ENCODE measurements at regions of chr20 and their contacts with region 1.

Region 1: GRCh38 chr20:19784511-19785172 is 26.6 kb downstream of the RIN2 start:
- DNase-seq: peak; percentile 82
- H3K4me3 ChIP-seq: no peak overlapping the region
- H3K27ac ChIP-seq: peak overlapping the region; percentile 93
- H3K4me1 ChIP-seq: peaks cover 44% of the 10 kb centered on the region
- H3K27me3 ChIP-seq: no peaks in the 10 kb centered on the region
- CTCF ChIP-seq: peak; percentile 74 to 78

Region 2: GRCh38 chr20:19725814-19726525 is 58.7 kb before region 1 on chr20:
- CTCF ChIA-PET with region 1: no interaction called
- dilution Hi-C with region 1: no loop called
- in situ Hi-C with region 1: no loop called
- intact Hi-C with region 1: no loop called
- DNase-seq: peak; percentile 35
- H3K4me3 ChIP-seq: no peak overlapping the region
- H3K27ac ChIP-seq: no peak overlapping the region
- H3K4me1 ChIP-seq: peaks cover 4% of the 10 kb centered on the region
- H3K27me3 ChIP-seq: no peaks in the 10 kb centered on the region
- CTCF ChIP-seq: no peak

Region 3: DNA sequence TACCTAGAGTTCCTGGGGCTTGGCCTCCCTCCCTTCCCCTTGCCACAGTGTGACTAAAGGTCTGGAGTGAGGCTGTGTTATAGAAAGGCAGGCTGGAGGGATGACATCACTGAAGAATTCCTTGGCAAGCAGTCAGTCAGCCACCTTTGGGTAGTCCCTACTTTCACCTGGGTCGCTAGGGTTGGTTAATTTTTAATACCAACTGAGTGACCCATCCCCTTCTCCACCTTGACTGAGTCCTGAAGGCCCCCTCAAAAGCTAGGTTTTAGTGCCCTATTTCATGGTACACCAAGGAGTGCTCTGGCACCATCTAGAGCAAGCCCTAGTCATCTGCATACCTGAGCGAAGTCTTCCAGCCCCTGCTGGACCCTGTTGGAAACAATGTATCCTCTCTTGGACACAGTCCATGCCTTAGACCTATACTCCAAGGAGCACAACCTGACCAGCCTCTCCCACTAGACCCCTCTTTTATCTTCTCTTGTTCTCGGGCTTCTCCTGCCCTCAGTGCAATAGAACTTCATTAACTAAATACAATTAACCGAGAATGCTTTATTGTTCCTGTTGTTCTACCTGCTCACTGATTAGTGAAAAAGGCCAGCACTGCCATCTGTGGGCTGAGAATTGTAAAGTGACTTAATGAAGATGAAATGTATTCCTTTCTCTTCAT is 18.0 kb after region 1 on chr20:
- CTCF ChIA-PET with region 1: no interaction called
- dilution Hi-C with region 1: no loop called
- in situ Hi-C with region 1: no loop called
- intact Hi-C with region 1: loop called (anchors 1 kb)
- DNase-seq: peak; percentile 89
- H3K4me3 ChIP-seq: no peak overlapping the region
- H3K27ac ChIP-seq: peak overlapping the region; percentile 43
- H3K4me1 ChIP-seq: peaks cover 26% of the 10 kb centered on the region
- H3K27me3 ChIP-seq: no peaks in the 10 kb centered on the region
- CTCF ChIP-seq: peak; percentile 39 to 43

Region 4: DNA sequence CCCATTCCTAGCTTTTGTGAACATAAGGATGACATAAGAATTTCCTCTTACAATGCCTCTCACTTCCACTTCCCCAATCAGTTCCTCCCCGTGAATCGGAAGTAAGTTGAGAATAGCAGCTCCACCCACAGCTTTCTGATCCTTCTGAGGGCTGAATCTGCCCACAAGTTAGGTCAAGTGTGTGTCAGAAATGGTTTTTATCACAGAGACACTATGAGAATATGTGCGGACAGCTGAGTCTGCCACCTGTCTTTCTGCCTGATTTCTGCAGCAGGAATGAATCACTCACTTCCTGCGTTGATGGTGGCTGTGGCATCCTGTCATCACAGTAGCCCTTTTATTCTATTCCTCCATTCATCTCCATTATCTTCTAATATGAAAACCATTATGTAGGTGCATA is 43.6 kb after region 1 on chr20:
- CTCF ChIA-PET with region 1: no interaction called
- dilution Hi-C with region 1: no loop called
- in situ Hi-C with region 1: no loop called
- intact Hi-C with region 1: loop called (anchors 1 kb)
- DNase-seq: peak; percentile 78
- H3K4me3 ChIP-seq: no peak overlapping the region
- H3K27ac ChIP-seq: no peak overlapping the region
- H3K4me1 ChIP-seq: peaks cover 16% of the 10 kb centered on the region
- H3K27me3 ChIP-seq: no peaks in the 10 kb centered on the region
- CTCF ChIP-seq: peak; percentile 40 to 62

Region 5: DNA sequence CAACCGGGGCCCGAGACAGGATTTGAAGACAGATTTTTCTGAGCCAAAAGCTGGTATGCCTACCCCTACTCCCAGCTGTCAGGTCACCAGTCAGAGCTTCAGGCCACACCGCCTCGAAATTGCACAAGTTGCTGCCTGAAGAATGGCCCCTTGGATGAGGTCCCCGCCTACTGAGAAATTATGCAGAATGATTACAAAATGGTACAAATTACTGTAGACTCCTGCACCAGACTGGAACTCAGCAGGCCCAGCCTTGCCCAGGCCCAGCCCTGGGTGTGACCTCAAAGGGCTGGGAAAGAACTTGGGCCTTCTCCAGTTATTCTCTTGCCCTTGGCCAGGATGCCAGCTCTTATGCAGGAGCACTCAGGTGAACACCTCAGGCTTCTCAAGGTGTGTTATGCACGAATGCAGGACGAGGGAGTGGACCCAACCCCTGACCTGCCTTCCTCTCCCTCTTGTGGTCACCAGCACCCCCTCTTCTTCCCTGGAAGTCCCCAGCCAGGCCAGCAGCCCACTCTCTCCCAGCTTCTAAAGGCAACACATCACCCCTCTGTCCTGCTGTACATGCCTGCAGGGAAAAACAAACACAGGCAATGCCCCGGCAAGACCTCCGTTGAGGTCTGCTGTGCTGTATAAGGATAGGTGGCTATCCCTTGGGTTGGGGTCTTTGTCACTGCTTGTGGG is 143.8 kb after region 1 on chr20:
- CTCF ChIA-PET with region 1: no interaction called
- dilution Hi-C with region 1: no loop called
- in situ Hi-C with region 1: no loop called
- intact Hi-C with region 1: loop called (anchors 2 kb)
- DNase-seq: peak; percentile 97
- H3K4me3 ChIP-seq: no peak overlapping the region
- H3K27ac ChIP-seq: peak overlapping the region; percentile 80
- H3K4me1 ChIP-seq: peaks cover 26% of the 10 kb centered on the region
- H3K27me3 ChIP-seq: no peaks in the 10 kb centered on the region
- CTCF ChIP-seq: no peak

Region 6: DNA sequence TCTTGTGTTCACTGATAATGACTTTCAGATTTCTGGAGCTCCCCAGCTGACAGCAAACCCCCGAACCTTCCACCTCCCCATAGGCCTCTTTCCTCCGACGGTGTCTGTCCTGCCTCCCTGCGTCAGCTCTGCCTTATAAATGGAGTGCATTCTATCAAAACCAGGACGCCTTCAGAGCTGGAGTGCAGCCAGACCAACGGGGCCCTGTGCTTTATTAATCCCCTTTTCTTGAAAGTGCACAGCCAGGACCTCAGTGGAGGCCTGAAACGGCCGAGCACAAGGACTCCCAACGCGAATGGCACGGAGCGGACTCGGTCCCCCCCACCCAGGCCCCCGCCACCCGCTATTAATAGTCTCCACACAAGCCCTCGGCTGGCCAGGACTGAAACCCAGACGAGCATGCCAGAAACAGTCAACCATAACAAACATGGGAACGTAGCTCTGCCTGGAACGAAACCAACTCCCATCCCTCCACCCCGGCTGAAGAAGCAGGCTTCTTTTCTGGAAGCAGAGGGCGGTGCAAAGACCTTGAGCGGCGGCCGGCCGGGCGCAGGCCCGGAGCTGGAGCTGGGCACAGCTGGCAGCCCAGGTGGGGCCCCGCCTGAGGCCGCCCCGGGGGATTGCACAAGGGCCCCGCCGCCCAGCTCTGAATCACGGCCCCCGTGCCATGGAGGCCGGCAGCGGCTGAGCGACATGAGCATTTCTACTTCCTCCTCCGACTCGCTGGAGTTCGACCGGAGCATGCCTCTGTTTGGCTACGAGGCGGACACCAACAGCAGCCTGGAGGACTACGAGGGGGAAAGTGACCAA is 190.2 kb after region 1 on chr20:
- CTCF ChIA-PET with region 1: no interaction called
- dilution Hi-C with region 1: no loop called
- in situ Hi-C with region 1: no loop called
- intact Hi-C with region 1: loop called (anchors 1 kb)
- DNase-seq: peak; percentile 91
- H3K4me3 ChIP-seq: peak overlapping the region; percentile 68 to 92 (median 86)
- H3K27ac ChIP-seq: peak overlapping the region; percentile 94
- H3K4me1 ChIP-seq: peaks cover 34% of the 10 kb centered on the region
- H3K27me3 ChIP-seq: no peaks in the 10 kb centered on the region
- CTCF ChIP-seq: no peak

Region 7: GRCh38 chr20:20003031-20003954 is 218.7 kb after region 1 on chr20:
- CTCF ChIA-PET with region 1: no interaction called
- dilution Hi-C with region 1: no loop called
- in situ Hi-C with region 1: loop called in 1 of 2 experiments (anchors 5 kb)
- intact Hi-C with region 1: no loop called
- DNase-seq: peak; percentile 56
- H3K4me3 ChIP-seq: no peak overlapping the region
- H3K27ac ChIP-seq: peak overlapping the region; percentile 17
- H3K4me1 ChIP-seq: peaks cover 12% of the 10 kb centered on the region
- H3K27me3 ChIP-seq: no peaks in the 10 kb centered on the region
- CTCF ChIP-seq: no peak

Region 8: DNA sequence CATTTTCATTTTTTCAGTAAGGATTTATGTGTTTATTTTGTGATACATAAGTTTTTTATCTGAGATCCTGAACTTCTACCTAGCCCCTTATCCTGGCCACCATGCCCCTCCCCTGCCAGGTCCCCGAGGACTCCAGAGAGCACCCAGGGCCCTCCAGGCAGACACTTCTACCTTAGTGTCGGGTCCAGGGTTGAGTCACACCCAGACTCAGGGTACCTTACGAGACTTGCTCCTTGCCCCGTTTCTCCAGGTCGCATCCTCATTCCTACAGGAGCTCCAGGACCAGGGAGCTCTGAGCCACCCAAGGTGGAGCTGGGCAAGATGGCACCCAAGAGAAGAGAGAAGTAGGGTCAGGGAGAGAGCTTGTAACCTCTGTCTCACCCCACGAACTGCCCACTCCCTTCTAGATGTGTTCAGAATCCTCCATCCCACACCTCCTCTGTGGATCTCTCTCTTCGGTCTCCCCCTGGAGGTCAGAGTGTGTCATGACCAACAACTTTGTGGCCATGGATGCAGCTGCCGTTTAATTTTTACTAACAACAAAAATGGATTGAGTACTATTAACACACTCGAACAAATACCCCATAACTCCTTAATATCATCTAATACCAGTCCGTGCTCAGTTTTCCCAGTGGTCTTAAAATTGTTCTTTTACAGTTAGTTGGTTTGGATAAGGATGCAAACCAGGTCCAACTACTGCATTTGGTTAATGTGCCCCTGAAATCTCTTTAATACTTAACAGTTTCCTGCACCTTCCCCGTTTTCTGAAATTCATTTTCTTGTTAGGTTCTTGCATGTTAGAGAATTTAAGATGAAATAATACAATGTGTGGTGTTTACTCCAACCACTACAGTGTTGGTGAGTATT is 452.7 kb after region 1 on chr20:
- CTCF ChIA-PET with region 1: no interaction called
- dilution Hi-C with region 1: no loop called
- in situ Hi-C with region 1: no loop called
- intact Hi-C with region 1: loop called (anchors 5 kb)
- DNase-seq: peak; percentile 29
- H3K4me3 ChIP-seq: no peak overlapping the region
- H3K27ac ChIP-seq: no peak overlapping the region
- H3K4me1 ChIP-seq: no peaks in the 10 kb centered on the region
- H3K27me3 ChIP-seq: peaks cover 3% of the 10 kb centered on the region
- CTCF ChIP-seq: peak; percentile 73 to 83

Measured in mammary epithelial cell (primary cell).